ENCODE measurements at regions of chr13 and their contacts with region 1.

Region 1: GRCh38 chr13:23960566-23961156 is 63.4 kb upstream of the C1QTNF9B start:
- DNase-seq: peak; percentile 57
- H3K4me3 ChIP-seq: no peak overlapping the region
- H3K27ac ChIP-seq: no peak overlapping the region
- H3K4me1 ChIP-seq: no peaks in the 10 kb centered on the region
- H3K27me3 ChIP-seq: no peaks in the 10 kb centered on the region
- CTCF ChIP-seq: peak; percentile 80

Region 2: DNA sequence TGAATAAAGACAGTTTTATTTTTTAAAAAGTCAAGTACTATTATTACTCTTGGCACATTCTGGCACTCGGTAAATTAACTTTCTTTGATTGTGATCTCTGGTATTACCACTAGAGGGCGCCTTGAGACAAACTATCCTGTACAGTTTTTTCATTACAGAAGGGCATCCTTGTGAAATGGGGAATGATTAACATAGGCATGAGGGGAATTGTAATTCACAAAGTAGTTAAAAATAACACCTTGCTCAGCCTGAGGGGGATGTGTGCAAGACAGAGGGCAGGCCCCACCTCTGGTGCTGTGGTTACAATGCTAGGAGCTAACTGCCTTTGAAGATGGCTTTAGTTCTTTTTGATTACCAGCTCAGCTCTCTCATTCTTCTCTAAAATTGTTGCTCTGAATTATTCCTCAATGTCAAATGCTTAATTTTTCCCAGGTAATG is 39.2 kb before region 1 on chr13:
- CTCF ChIA-PET with region 1: interaction called, 5 read pairs
- POLR2A ChIA-PET with region 1: no interaction called
- intact Hi-C with region 1: loop called (anchors 1 kb)
- DNase-seq: peak; percentile 65
- H3K4me3 ChIP-seq: no peak overlapping the region
- H3K27ac ChIP-seq: no peak overlapping the region
- H3K4me1 ChIP-seq: no peaks in the 10 kb centered on the region
- H3K27me3 ChIP-seq: peaks cover 15% of the 10 kb centered on the region
- CTCF ChIP-seq: peak; percentile 82

Region 3: GRCh38 chr13:24396821-24397220 is 436.2 kb after region 1 on chr13:
- CTCF ChIA-PET with region 1: no interaction called
- POLR2A ChIA-PET with region 1: no interaction called
- intact Hi-C with region 1: no loop called
- DNase-seq: no peak
- H3K4me3 ChIP-seq: no peak overlapping the region
- H3K27ac ChIP-seq: no peak overlapping the region
- H3K4me1 ChIP-seq: no peaks in the 10 kb centered on the region
- H3K27me3 ChIP-seq: no peaks in the 10 kb centered on the region
- CTCF ChIP-seq: no peak

Measured in A673 (cell line).